Left ventricle myocardium inferior (tissue), 1 donor: ENCODE measurements at regions of chr2 and their contacts with region 1.

Region 1: DNA sequence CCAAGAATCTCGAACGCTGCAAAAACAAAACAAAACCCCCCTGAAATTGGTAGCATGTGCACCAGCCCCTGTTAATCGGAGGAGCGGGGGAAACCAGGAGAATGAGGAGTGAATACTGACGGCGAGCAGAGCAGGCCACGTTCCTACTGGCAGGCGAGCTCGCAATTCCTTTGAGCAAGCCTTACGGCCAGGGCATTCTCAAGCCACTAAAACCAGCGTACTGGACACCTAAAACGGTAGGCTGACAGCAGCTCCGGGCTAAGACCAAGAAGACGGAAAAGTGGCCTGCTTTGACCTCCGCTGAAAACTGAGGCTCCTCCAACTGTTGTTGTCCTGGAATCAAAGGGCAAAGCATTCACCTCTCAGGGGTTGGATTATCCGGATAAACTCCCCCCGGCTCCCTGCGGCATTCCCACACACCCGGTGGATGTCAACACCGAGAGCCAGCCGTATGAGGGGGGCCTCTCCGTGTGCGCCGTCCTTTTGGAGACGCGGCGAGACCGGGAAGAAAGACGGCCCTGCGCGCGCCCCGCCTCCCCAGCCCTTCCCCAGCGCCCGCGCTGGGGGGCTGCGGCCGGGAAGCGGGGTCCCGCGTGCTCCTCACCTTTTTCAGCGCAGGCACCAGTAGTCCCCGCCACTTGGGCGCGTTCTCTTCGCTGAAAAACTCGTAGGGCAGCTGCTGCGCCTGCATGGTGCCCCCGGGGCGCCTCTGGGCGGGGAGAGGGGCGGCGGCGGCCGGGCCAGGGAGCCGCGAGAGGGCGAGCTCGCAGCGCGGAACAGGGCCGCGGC is 925 bp downstream of the SOS1 start:
- DNase-seq: peak; percentile 46
- H3K4me3 ChIP-seq: peak overlapping the region; percentile 92
- H3K27ac ChIP-seq: peak overlapping the region; percentile 98
- H3K4me1 ChIP-seq: peaks cover 81% of the 10 kb centered on the region
- H3K27me3 ChIP-seq: no peaks in the 10 kb centered on the region
- CTCF ChIP-seq: peak; percentile 56

Region 2: DNA sequence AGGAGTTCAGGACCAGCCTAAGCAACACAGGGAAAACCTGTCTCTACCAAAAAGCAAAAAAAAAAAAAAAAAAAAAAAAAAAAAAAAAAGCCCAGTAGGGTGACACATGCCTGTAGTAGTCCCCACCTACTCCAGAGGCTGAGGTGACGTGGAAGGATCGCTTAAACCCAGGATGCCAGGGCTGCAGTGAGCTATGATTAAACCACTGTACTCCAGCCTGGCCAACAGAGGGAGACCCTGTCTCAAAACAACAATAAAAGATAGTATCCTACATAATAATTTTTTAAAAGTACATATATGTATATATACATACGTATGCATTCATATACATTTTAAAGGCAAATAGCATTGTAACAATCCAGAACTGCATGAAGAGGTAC is 50.8 kb before region 1 on chr2:
- intact Hi-C with region 1: loop called (anchors 10 kb)
- DNase-seq: no peak
- H3K4me3 ChIP-seq: no peak overlapping the region
- H3K27ac ChIP-seq: no peak overlapping the region
- H3K4me1 ChIP-seq: peaks cover 26% of the 10 kb centered on the region
- H3K27me3 ChIP-seq: no peaks in the 10 kb centered on the region
- CTCF ChIP-seq: no peak

Region 3: DNA sequence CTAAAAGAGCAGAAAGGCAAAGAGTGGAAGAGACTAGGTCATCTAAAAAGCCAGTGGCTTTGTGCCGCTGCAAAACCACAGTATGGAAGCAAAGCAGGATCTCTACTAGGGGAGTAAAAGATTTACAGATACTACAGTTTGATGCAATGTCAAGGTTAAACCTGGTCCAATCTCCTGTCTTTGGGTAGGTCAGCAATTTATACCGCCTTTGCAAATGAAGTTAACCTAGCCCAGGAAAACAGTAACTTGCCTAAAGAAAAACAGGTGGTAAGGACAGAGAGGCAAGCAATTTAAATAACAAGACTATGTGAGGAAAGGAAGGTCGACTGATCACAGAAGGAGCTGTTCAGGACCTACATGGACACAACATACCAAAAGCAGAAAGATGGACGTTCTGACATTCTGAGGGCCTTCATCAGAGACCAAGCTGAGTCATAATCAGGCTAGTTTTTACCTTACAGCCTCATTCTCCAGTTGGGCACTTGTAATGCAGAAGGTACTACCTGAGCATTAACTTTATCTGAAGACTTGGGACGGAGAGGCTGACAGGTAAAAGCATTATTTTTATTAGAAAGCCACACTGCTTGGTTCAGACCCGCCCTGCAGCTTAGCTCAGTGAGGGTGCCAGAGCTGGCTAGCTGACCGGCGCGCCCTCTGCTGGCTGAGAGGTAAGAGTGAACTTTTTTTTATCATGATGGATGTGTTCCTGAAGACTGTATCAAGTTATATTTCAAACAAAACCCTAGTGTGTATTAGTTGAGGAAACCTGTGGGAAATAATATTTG is 107.9 kb after region 1 on chr2:
- intact Hi-C with region 1: loop called (anchors 10 kb)
- DNase-seq: peak; percentile 80
- H3K4me3 ChIP-seq: peak overlapping the region; percentile 48
- H3K27ac ChIP-seq: no peak overlapping the region
- H3K4me1 ChIP-seq: peaks cover 25% of the 10 kb centered on the region
- H3K27me3 ChIP-seq: no peaks in the 10 kb centered on the region
- CTCF ChIP-seq: peak; percentile 90

Region 4: GRCh38 chr2:39243476-39244123 is 123.7 kb after region 1 on chr2 and contains the start of gene CDKL4:
- intact Hi-C with region 1: no loop called
- DNase-seq: peak; percentile 35
- H3K4me3 ChIP-seq: peak within 1 kb of the TSS; percentile 58
- H3K27ac ChIP-seq: no peak within 1 kb of the TSS
- H3K4me1 ChIP-seq: peaks cover 5% of the 10 kb centered on the region
- H3K27me3 ChIP-seq: no peaks in the 10 kb centered on the region
- CTCF ChIP-seq: no peak
- total RNA-seq, gene CDKL4: 0.66 TPM